SK-N-SH (cell line): ENCODE measurements at regions of chr21 and their contacts with region 1.

Region 1: GRCh38 chr21:42593007-42593806 is 60.2 kb upstream of the PDE9A start:
- DNase-seq: peak; percentile 95
- H3K4me3 ChIP-seq: peak overlapping the region in 1 of 2 experiments; percentile 35; a peak in 1 of 4 replicates
- H3K27ac ChIP-seq: no peak overlapping the region
- H3K4me1 ChIP-seq: peaks cover 0 to 4% of the 10 kb centered on the region in 2 experiments; a peak in 1 of 4 replicates
- H3K27me3 ChIP-seq: no peaks in the 10 kb centered on the region
- CTCF ChIP-seq: no peak; the same call in 1 of the 2 replicates
- EP300 ChIP-seq: no peak
- RAD21 ChIP-seq: peak; percentile 85

Region 2: DNA sequence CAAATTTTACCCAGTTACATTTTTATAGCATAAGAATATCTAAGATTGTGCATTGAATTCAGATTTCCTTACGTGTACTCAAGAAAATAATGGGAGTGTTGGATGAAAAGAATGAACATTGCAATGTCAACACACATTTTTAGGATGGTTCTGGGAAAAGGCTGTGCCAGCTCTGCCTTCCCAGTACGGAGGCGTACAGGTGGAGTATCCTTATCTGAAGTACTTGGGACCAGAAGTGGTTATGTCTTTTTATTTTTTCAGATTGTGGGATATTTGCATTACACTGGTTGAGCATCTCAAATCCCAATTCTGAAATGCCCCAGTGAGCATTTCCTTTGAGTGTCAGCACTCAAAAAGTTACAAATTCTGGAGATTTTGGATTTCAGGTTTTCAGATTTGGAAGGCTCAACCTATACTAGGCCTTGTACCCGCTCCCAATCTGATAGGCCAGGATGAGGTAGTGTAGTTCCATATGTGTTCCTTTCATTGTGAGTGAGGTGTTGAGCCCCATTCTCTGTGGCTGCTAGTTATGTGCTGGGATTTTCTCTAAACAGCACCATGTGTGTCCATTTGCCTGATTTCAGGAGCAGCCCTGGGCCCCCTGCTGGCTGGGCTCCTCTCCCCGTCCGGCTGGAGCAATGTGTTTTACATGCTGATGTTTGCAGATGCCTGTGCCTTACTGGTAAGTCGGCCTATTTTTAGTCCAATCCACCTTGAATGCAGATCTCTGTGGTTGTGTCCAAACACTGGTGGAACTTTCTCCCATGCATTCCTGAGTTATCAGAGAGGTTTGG is 18.8 kb before region 1 on chr21:
- CTCF ChIA-PET with region 1: interaction called, 29 read pairs
- POLR2A ChIA-PET with region 1: no interaction called
- DNase-seq: peak; percentile 72
- H3K4me3 ChIP-seq: no peak overlapping the region
- H3K27ac ChIP-seq: no peak overlapping the region
- H3K4me1 ChIP-seq: peaks cover 0 to 6% of the 10 kb centered on the region in 2 experiments; a peak in 1 of 4 replicates
- H3K27me3 ChIP-seq: no peaks in the 10 kb centered on the region
- CTCF ChIP-seq: peak; percentile 10; the same call in 1 of the 2 replicates
- EP300 ChIP-seq: no peak
- RAD21 ChIP-seq: peak; percentile 55

Region 3: GRCh38 chr21:42607102-42607789 is 14.0 kb after region 1 on chr21:
- CTCF ChIA-PET with region 1: interaction called, 13 read pairs
- POLR2A ChIA-PET with region 1: no interaction called
- DNase-seq: no peak
- H3K4me3 ChIP-seq: no peak overlapping the region
- H3K27ac ChIP-seq: no peak overlapping the region
- H3K4me1 ChIP-seq: no peaks in the 10 kb centered on the region
- H3K27me3 ChIP-seq: no peaks in the 10 kb centered on the region
- CTCF ChIP-seq: no peak
- EP300 ChIP-seq: no peak
- RAD21 ChIP-seq: no peak

Region 4: DNA sequence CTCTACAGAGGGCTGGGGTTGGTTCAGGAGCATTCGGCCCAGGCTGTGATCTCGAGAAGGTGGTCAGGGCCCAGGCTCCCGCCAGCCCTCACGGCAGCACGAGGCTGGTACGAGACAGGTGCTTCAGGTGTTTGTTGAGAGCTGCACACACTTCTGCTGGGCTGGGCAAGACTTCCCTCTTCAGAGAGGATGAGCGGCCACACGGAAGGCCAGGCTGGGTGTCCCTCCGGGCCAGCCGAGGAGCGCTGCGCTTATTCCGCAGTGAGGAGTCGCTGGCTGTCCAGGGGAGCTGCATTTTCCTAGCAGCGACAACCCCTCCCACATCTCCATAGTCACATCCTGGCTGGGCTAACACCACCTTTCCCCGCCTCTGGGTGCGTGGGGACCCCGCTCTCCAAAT is 110.8 kb after region 1 on chr21:
- CTCF ChIA-PET with region 1: no interaction called
- POLR2A ChIA-PET with region 1: no interaction called
- DNase-seq: no peak
- H3K4me3 ChIP-seq: no peak overlapping the region
- H3K27ac ChIP-seq: no peak overlapping the region
- H3K4me1 ChIP-seq: no peaks in the 10 kb centered on the region
- H3K27me3 ChIP-seq: no peaks in the 10 kb centered on the region
- CTCF ChIP-seq: no peak
- EP300 ChIP-seq: no peak
- RAD21 ChIP-seq: no peak

Region 5: DNA sequence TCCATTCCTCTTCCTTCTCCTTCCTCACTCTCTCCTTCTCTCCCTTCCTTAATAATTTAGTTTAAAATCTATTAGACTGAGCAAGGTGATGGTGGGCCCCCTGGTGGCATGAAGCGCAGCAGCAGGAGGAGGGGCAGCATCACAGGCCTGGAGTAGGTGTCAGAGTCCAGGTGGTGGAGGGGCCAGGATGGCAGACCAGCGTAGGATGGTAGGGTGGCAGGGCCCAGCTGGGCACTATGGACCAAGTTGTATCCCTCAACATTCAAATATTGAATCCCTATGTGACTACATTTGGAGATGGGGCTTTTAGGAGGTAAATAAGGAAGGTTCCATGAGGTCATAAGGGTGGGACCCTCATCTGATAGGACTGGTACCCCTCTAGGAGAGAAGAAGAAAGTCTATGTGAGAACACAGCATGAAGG is 225.1 kb after region 1 on chr21:
- CTCF ChIA-PET with region 1: interaction called, 52 read pairs
- POLR2A ChIA-PET with region 1: no interaction called
- DNase-seq: peak; percentile 58
- H3K4me3 ChIP-seq: no peak overlapping the region
- H3K27ac ChIP-seq: no peak overlapping the region
- H3K4me1 ChIP-seq: no peaks in the 10 kb centered on the region
- H3K27me3 ChIP-seq: no peaks in the 10 kb centered on the region
- CTCF ChIP-seq: peak; percentile 56
- EP300 ChIP-seq: no peak
- RAD21 ChIP-seq: peak; percentile 71

Region 6: GRCh38 chr21:42833439-42833815 is 240.2 kb after region 1 on chr21:
- CTCF ChIA-PET with region 1: interaction called, 13 read pairs
- POLR2A ChIA-PET with region 1: no interaction called
- DNase-seq: peak; percentile 77
- H3K4me3 ChIP-seq: no peak overlapping the region
- H3K27ac ChIP-seq: no peak overlapping the region
- H3K4me1 ChIP-seq: peaks cover 0 to 9% of the 10 kb centered on the region in 2 experiments; a peak in 1 of 4 replicates
- H3K27me3 ChIP-seq: no peaks in the 10 kb centered on the region
- CTCF ChIP-seq: peak; percentile 39; the same call in 1 of the 2 replicates
- EP300 ChIP-seq: no peak
- RAD21 ChIP-seq: peak; percentile 59